Dendritic cell treated with granulocyte-macrophage colony-stimulating factor and Interleukin-4, amounts not matched to agents 40 ng/mL and 50 ng/mL, for 4 days (primary cell): ENCODE measurements at regions of chr18 and their contacts with region 1.

Region 1: DNA sequence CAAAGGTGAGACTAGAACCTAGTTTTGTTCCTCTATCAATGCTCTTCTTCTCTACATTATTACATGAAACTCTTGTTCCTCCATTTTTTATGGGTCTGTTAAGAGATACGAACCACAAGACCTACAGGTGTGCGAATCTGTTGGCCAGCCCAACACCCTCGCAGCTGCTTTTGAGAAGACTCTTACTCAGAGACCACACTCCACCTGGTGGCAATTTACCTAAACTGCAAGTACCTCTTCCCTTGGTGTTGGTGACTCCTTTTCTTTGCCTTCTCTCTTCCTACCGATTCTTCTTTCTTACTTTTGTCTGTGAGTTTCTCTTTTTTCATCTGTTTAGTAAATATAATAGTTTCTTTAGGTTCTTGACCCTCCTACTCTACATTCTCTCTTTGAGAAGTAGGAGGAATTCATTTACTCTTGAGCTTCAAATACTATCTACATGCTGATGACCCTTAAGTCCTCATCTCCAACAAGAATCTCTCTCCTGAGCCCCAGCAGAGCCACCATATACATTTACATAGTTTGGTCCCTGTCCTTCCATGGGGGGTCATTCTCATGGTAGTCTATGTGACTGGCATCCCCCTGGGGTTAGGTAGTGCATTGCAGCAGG is 81.8 kb upstream of the GAREM1 start:
- H3K4me3 Mint-ChIP-seq: no peak overlapping the region
- H3K27ac Mint-ChIP-seq: no peak overlapping the region
- H3K4me1 Mint-ChIP-seq: no peaks in the 10 kb centered on the region
- H3K27me3 Mint-ChIP-seq: peaks cover 4% of the 10 kb centered on the region

Region 2: GRCh38 chr18:32158108-32158624 is 394.4 kb before region 1 on chr18:
- intact Hi-C with region 1: loop called (anchors 1 kb)
- H3K4me3 Mint-ChIP-seq: peak overlapping the region; percentile 61
- H3K27ac Mint-ChIP-seq: no peak overlapping the region
- H3K4me1 Mint-ChIP-seq: peaks cover 13% of the 10 kb centered on the region
- H3K27me3 Mint-ChIP-seq: peaks cover 7% of the 10 kb centered on the region

Region 3: DNA sequence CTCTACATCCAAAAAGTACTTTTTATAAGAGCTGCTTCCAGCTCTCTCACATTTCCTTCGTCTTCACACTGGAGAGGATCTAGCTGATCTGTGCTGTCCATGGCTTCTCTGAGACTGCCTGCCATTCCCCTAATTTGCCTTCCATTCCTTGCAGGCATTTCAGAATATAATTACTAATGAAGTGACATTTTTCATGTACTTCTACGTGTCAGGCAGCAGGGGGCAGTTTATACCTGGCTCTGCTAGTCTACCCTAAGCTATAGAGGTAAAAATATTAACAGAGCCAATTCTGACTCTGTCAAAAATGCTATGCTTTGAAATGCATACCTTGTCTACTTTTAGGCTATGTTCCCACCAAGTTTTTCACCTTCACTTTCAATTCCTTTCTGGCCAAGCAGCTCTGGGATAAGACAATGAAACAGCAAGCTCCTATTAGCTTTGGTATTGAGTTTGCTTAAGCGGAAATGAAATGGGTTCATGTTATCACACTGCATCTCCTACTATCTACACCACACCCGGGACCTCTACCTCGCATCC is 280.8 kb before region 1 on chr18:
- intact Hi-C with region 1: loop called (anchors 5 kb)
- H3K4me3 Mint-ChIP-seq: no peak overlapping the region
- H3K27ac Mint-ChIP-seq: no peak overlapping the region
- H3K4me1 Mint-ChIP-seq: no peaks in the 10 kb centered on the region
- H3K27me3 Mint-ChIP-seq: peaks cover 12% of the 10 kb centered on the region

Region 4: GRCh38 chr18:32289483-32290075 is 262.9 kb before region 1 on chr18:
- intact Hi-C with region 1: loop called (anchors 5 kb)
- H3K4me3 Mint-ChIP-seq: no peak overlapping the region
- H3K27ac Mint-ChIP-seq: no peak overlapping the region
- H3K4me1 Mint-ChIP-seq: no peaks in the 10 kb centered on the region
- H3K27me3 Mint-ChIP-seq: peaks cover 3% of the 10 kb centered on the region

Region 5: DNA sequence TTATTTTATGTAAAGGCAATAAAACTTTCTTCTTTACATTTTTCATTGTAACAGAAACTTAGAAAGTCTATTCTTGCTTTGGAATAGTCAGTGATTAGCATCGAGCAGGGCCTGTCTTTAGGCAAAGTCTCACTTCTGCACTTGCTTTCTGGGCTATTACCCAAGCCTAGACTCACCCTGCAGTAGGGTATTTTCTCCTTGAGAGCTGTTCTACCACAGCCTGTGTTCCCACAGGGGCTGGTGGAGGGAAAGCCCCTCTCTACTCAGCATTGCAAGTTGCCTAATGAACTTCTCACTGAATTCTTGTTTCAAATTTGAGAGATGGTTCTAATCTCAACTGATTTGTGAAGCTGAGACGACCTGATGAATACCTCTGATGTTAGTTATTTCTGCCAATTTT is 332.0 kb after region 1 on chr18:
- intact Hi-C with region 1: no loop called
- H3K4me3 Mint-ChIP-seq: no peak overlapping the region
- H3K27ac Mint-ChIP-seq: no peak overlapping the region
- H3K4me1 Mint-ChIP-seq: no peaks in the 10 kb centered on the region
- H3K27me3 Mint-ChIP-seq: no peaks in the 10 kb centered on the region